ENCODE measurements at regions of chr12 and their contacts with region 1.

Region 1: DNA sequence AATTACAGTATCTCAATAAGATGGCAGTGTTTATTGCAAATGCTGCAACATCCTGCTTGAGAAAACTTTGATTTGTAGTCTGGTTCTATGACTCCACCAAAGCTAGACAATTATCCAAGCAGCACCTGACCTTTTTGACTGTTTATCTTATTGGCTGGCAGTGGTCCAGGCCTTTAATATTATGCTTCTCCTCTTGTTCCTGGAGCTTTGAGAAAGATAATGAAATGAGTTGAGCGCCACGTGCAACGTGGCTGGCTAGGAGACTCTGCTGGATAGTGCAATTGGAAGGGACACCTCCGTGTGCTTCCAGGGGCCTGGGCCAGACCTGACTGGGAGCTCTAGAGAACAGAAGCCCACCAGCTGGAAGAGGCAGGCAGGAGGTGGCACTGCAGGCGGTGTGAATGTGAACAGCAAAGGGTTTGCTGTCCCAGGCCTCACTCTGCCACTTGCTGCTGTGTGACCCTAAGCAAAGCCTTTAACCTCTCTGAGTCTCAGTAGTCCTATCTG is 349.3 kb downstream of the CACNA1C start:
- DNase-seq: no peak
- H3K4me3 ChIP-seq: no peak overlapping the region
- H3K4me3 Mint-ChIP-seq: no peak overlapping the region
- H3K27ac ChIP-seq: no peak overlapping the region
- H3K27ac Mint-ChIP-seq: no peak overlapping the region
- H3K4me1 ChIP-seq: no peaks in the 10 kb centered on the region
- H3K4me1 Mint-ChIP-seq: peaks cover 7% of the 10 kb centered on the region
- H3K27me3 ChIP-seq: no peaks in the 10 kb centered on the region
- H3K27me3 Mint-ChIP-seq: peaks cover 0 to 9% (median 3%) of the 10 kb centered on the region in 3 donors
- CTCF ChIP-seq: no peak

Region 2: GRCh38 chr12:2284857-2285256 is 117.3 kb before region 1 on chr12:
- intact Hi-C with region 1: no loop called
- DNase-seq: peak; percentile 43 to 61 (median 55)
- H3K4me3 ChIP-seq: peak overlapping the region in 1 of 3 experiments; percentile 51
- H3K4me3 Mint-ChIP-seq: peak overlapping the region; percentile 72 to 85
- H3K27ac ChIP-seq: peak overlapping the region in 1 of 2 donors; percentile 8
- H3K27ac Mint-ChIP-seq: peak overlapping the region; percentile 21 to 84 (median 77)
- H3K4me1 ChIP-seq: peaks cover 61 to 66% of the 10 kb centered on the region in 2 donors
- H3K4me1 Mint-ChIP-seq: peaks cover 67% of the 10 kb centered on the region
- H3K27me3 ChIP-seq: no peaks in the 10 kb centered on the region
- H3K27me3 Mint-ChIP-seq: peaks cover 0 to 1% (median 1%) of the 10 kb centered on the region in 3 donors
- CTCF ChIP-seq: peak; percentile 78

Region 3: GRCh38 chr12:2336409-2336829 is 65.7 kb before region 1 on chr12:
- intact Hi-C with region 1: no loop called
- DNase-seq: peak; percentile 81 to 94 (median 93)
- H3K4me3 ChIP-seq: peak overlapping the region in 1 of 3 experiments; percentile 53
- H3K4me3 Mint-ChIP-seq: peak overlapping the region; percentile 42 to 68
- H3K27ac ChIP-seq: peak overlapping the region; percentile 93 to 97
- H3K27ac Mint-ChIP-seq: peak overlapping the region; percentile 91 to 98 (median 97)
- H3K4me1 ChIP-seq: peaks cover 78 to 81% of the 10 kb centered on the region in 2 donors
- H3K4me1 Mint-ChIP-seq: peaks cover 74% of the 10 kb centered on the region
- H3K27me3 ChIP-seq: no peaks in the 10 kb centered on the region
- H3K27me3 Mint-ChIP-seq: peaks cover 0 to 2% (median 0%) of the 10 kb centered on the region in 3 donors
- CTCF ChIP-seq: no peak

Region 4: DNA sequence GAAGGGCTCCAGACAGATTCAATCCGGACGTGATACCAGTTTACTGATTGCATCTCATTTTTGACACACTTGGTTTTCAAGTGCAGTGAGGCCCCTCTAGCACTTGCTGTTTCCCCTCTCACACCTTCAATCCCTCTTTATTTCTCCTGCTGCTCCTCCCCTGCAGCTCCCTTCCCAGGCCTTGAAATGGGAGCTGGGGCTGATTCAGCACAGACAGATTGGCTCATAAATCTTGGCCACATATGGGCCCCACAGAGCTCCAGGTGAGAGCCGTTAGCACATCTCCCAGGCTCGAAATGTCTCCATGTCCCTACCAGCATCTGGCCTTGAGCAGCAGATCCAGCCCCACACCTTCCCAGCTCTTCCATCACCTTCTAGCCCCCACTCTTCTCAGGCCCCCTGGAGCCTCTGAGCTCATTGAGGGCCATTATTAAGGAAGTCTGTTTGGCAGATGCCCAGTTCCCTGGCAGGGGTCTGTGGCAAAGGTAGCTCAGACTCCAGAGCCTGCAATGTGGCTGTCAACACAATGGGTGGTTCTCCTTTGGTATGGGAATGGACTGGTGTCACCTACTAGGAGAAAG is 172.3 kb after region 1 on chr12:
- intact Hi-C with region 1: loop called in 1 of 2 experiments (anchors 10 kb)
- DNase-seq: no peak
- H3K4me3 ChIP-seq: no peak overlapping the region
- H3K4me3 Mint-ChIP-seq: no peak overlapping the region
- H3K27ac ChIP-seq: no peak overlapping the region
- H3K27ac Mint-ChIP-seq: peak overlapping the region in 1 of 7 donors; percentile 26
- H3K4me1 ChIP-seq: no peaks in the 10 kb centered on the region
- H3K4me1 Mint-ChIP-seq: no peaks in the 10 kb centered on the region
- H3K27me3 ChIP-seq: no peaks in the 10 kb centered on the region
- H3K27me3 Mint-ChIP-seq: peaks cover 0 to 8% (median 8%) of the 10 kb centered on the region in 3 donors
- CTCF ChIP-seq: no peak

Region 5: DNA sequence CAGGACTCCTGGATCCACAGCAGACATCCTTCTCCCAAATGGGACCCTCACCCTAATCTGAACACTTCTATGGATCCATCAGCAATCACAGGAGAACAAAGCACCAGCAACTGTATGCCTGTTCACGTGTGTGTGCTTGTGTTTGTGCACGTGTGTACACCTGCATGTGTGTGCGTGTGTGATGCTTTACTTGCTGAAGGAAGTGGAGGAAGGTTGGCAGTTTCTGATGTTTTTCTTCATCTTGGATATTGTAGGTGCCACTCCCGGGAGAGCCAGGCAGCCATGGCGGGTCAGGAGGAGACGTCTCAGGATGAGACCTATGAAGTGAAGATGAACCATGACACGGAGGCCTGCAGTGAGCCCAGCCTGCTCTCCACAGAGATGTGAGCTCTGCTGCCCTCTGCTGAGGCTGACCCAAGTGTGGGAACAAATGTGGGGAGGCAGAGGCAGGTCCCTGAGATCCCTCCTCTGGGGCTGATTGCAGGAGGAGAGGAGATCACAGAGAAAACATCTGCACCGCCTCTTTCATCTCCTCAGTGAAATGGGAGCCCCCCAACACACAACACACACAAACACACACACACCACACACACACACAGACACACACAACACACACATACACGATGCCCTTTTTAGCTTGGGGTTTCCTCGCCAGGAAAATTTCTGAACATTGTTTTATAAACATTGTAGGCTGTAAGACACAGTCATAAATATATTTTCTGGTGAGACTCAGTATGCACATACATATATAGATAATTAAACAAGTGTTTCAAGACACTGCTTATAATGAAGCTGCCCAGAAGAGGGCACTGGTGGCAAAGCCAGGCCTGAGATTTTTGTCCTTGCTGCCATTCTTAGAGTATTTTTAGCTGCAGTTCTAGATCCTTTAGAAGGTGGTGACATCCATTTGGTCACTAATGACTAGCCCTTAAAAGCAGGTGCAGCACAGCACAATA is 280.4 kb after region 1 on chr12:
- intact Hi-C with region 1: no loop called
- DNase-seq: no peak
- H3K4me3 ChIP-seq: no peak overlapping the region
- H3K4me3 Mint-ChIP-seq: no peak overlapping the region
- H3K27ac ChIP-seq: no peak overlapping the region
- H3K27ac Mint-ChIP-seq: peak overlapping the region in 2 of 7 donors; percentile 40 to 66
- H3K4me1 ChIP-seq: peaks cover 0 to 4% of the 10 kb centered on the region in 2 donors
- H3K4me1 Mint-ChIP-seq: peaks cover 2% of the 10 kb centered on the region
- H3K27me3 ChIP-seq: no peaks in the 10 kb centered on the region
- H3K27me3 Mint-ChIP-seq: peaks cover 1 to 3% (median 2%) of the 10 kb centered on the region in 3 donors
- CTCF ChIP-seq: peak; percentile 43

Region 6: DNA sequence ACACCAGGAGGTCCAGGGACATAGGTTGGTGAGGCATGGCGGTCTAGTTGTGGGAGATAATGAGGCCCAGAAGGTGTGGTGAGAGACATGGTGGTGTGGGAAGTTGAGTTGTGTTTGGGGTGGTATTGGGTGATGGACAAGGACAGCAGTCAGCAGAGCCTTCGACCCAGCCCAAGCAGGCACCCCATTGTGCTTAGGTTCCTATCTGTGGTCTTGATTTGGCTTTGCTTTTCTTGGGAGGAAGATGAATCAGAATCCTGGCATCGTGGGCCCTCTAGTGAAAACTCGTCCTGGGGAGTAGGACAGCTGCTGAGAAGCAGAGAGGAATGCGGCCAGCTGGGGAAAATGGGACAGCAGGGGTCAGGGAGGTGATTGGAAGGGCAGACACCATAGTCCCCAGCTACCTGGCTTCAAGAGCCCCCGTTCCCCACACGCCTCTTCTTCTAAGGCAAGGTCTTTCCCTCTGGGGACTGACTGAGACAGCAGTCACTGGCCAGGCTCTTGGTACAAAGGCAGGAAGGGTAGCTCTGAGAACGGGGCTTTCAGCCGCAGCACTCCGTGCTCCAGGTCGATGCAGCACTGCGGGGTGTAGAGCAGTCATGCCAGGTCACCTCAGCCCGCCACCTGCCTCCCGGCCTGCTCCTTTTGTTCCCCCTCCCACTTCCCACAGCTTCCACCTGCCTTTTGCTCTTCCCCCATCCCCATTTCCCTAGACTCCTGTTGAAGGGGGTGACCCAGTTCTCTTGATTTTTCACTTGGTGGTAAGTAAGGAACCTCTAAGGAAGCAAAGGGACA is 424.8 kb after region 1 on chr12:
- intact Hi-C with region 1: no loop called
- DNase-seq: no peak
- H3K4me3 ChIP-seq: no peak overlapping the region
- H3K4me3 Mint-ChIP-seq: no peak overlapping the region
- H3K27ac ChIP-seq: no peak overlapping the region
- H3K27ac Mint-ChIP-seq: peak overlapping the region in 2 of 7 donors; percentile 23 to 65
- H3K4me1 ChIP-seq: no peaks in the 10 kb centered on the region
- H3K4me1 Mint-ChIP-seq: no peaks in the 10 kb centered on the region
- H3K27me3 ChIP-seq: no peaks in the 10 kb centered on the region
- H3K27me3 Mint-ChIP-seq: peaks cover 0 to 1% (median 0%) of the 10 kb centered on the region in 3 donors
- CTCF ChIP-seq: no peak

Measured in CD14-positive monocyte (primary cell).